GM12878 (cell line): ENCODE measurements at regions of chr2 and their contacts with region 1.

Region 1: DNA sequence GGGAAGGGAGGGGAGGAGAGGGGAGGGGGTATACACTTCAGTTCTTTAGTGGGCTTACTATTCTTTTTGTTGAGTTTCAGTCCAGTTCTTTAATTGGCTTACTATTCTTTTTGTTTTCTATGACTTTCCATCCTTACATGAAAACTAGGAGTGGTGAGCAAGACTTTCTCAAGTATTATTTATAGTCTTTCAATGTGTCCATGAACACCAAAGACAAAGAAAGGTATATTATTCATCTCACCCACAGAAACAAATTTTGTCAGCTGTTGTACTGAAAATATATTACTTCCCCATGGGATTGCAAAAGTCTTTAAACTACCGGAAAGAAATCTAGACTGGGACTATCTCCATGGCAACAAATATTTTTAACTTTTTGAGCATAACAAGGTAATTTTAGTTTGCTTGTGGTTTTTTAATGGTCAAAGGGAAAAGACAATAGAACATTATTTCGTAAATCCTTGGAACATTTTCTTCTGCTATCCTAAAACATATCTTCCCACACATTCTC is 17.6 kb downstream of the ADAM17 start:
- DNase-seq: no peak
- ATAC-seq: peak; percentile 40
- H3K4me3 ChIP-seq: no peak overlapping the region
- H3K27ac ChIP-seq: no peak overlapping the region; the same call in 1 of the 2 replicates
- H3K4me1 ChIP-seq: peaks cover 20% of the 10 kb centered on the region
- H3K27me3 ChIP-seq: no peaks in the 10 kb centered on the region
- CTCF ChIP-seq: no peak
- EP300 ChIP-seq: peak in 1 of 2 experiments; percentile 44; a peak in 1 of 4 replicates
- POLR2A ChIP-seq: no peak
- RAD21 ChIP-seq: no peak

Region 2: GRCh38 chr2:9548506-9548905 is 10.5 kb after region 1 on chr2:
- CTCF ChIA-PET with region 1: interaction called, 17 read pairs
- POLR2A ChIA-PET with region 1: interaction called, 64 read pairs
- RAD21 ChIA-PET with region 1: interaction called, 54 read pairs
- SMC1A ChIA-PET with region 1: interaction called, 152 read pairs
- in situ Hi-C with region 1: no loop called
- intact Hi-C with region 1: loop called (anchors 1 kb)
- DNase-seq: no peak
- ATAC-seq: peak; percentile 70
- H3K4me3 ChIP-seq: peak overlapping the region; percentile 64
- H3K27ac ChIP-seq: peak overlapping the region; percentile 83
- H3K4me1 ChIP-seq: peaks cover 67% of the 10 kb centered on the region
- H3K27me3 ChIP-seq: no peaks in the 10 kb centered on the region
- CTCF ChIP-seq: no peak
- EP300 ChIP-seq: 0 out of 4 replicates have a peak, but pooled peaks of 1 of the 2 experiments have one; percentile 4
- POLR2A ChIP-seq: no peak
- RAD21 ChIP-seq: no peak

Region 3: DNA sequence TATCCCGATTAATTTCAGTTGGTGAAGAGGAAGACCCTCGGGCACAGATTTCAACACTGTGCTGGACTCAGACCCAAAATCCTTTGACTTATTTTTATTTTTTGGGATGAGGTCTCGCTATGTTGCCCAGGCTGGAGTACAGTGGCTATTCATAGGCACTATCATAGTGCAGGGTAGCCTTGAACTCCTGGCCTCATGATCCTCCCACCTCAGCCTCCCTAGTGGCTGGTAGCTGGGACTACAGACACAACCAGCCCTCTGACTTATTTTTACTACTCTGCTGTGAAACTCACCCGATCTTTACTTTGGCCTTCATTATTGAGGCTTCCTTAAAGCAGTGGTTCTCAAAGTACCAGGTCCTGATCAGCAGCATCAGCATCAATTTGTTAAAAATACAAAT is 35.8 kb after region 1 on chr2:
- CTCF ChIA-PET with region 1: no interaction called
- POLR2A ChIA-PET with region 1: no interaction called
- RAD21 ChIA-PET with region 1: no interaction called
- SMC1A ChIA-PET with region 1: no interaction called
- in situ Hi-C with region 1: no loop called
- intact Hi-C with region 1: no loop called
- DNase-seq: no peak
- ATAC-seq: peak; percentile 60
- H3K4me3 ChIP-seq: no peak overlapping the region
- H3K27ac ChIP-seq: no peak overlapping the region
- H3K4me1 ChIP-seq: no peaks in the 10 kb centered on the region
- H3K27me3 ChIP-seq: no peaks in the 10 kb centered on the region
- CTCF ChIP-seq: 0 out of 6 replicates have a peak, but pooled peaks of 1 of the 3 experiments have one; percentile 9
- EP300 ChIP-seq: no peak
- POLR2A ChIP-seq: no peak
- RAD21 ChIP-seq: no peak